ENCODE measurements at regions of chr6 and their contacts with region 1.

Region 1: DNA sequence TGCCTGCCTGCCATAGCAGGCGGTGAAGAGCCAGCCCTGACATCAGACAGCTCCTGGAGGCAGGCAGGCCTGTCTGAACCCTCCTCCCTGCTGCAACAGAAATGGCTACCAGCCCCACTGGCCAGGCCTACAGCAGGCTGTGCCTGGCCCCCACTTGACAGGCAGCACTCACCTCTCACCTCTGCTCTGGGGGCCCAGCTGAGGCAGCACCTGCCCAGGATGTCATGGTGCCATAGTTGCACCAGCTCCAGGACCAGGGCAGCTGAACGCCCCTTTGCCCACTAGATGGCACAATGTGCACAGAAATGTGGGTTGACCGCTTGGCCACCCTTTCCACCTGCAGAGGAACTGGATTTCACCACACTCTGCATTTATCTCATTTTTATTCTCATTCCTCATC is 30.6 kb downstream of the MRPL14 start:
- DNase-seq: peak; percentile 85
- H3K4me3 Mint-ChIP-seq: no peak overlapping the region
- H3K27ac Mint-ChIP-seq: peak overlapping the region; percentile 18
- H3K4me1 Mint-ChIP-seq: no peaks in the 10 kb centered on the region
- H3K27me3 Mint-ChIP-seq: no peaks in the 10 kb centered on the region

Region 2: GRCh38 chr6:44111434-44112417 is 15.1 kb after region 1 on chr6:
- CTCF ChIA-PET with region 1: interaction called, 12 read pairs
- POLR2A ChIA-PET with region 1: no interaction called
- intact Hi-C with region 1: no loop called
- DNase-seq: no peak
- H3K4me3 Mint-ChIP-seq: no peak overlapping the region
- H3K27ac Mint-ChIP-seq: no peak overlapping the region
- H3K4me1 Mint-ChIP-seq: peaks cover 7% of the 10 kb centered on the region
- H3K27me3 Mint-ChIP-seq: no peaks in the 10 kb centered on the region

Region 3: GRCh38 chr6:44116641-44117382 is 20.2 kb after region 1 on chr6:
- CTCF ChIA-PET with region 1: interaction called, 12 read pairs
- POLR2A ChIA-PET with region 1: interaction called, 4 read pairs
- intact Hi-C with region 1: no loop called
- DNase-seq: no peak
- H3K4me3 Mint-ChIP-seq: no peak overlapping the region
- H3K27ac Mint-ChIP-seq: no peak overlapping the region
- H3K4me1 Mint-ChIP-seq: peaks cover 43% of the 10 kb centered on the region
- H3K27me3 Mint-ChIP-seq: no peaks in the 10 kb centered on the region

Region 4: DNA sequence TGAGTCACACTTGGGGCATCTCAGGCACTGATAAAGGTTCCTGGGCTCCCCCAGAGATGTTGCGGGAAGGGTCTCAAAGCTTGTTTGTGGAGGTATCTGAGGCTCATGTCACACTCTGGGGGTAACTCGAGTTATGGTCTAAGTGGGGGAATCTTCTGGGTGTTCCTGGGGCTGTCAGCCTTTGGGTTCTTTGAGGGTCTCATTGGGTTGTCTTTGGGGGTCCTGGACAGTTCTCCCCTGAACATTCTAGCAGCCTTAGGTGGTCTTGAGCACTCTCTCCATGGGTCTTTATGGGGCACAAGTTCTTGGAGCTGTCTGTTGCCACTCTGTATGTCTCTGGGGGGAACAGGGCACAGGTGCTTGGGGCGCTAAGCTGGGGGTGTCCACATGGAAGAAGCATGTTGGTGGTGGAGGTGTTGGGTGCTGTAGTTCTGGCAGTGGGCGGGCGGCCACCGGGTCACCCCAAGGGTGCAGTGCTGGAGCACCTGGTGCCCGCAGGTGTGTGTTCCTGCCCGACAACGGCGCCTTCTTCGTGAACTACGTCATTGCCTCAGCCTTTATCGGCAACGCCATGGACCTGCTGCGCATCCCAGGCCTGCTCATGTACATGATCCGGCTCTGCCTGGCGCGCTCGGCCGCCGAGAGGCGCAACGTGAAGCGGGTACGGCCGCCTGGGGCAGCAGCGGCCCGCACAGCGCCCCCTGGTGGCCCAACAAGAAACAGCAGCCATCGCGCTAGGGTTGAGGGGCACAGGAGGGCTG is 54.9 kb after region 1 on chr6:
- CTCF ChIA-PET with region 1: interaction called, 41 read pairs
- POLR2A ChIA-PET with region 1: no interaction called
- intact Hi-C with region 1: loop called (anchors 1 kb)
- DNase-seq: peak; percentile 85
- H3K4me3 Mint-ChIP-seq: no peak overlapping the region
- H3K27ac Mint-ChIP-seq: no peak overlapping the region
- H3K4me1 Mint-ChIP-seq: peaks cover 5% of the 10 kb centered on the region
- H3K27me3 Mint-ChIP-seq: no peaks in the 10 kb centered on the region

Region 5: GRCh38 chr6:44237813-44238433 is 141.3 kb after region 1 on chr6:
- CTCF ChIA-PET with region 1: interaction called, 9 read pairs
- POLR2A ChIA-PET with region 1: no interaction called
- intact Hi-C with region 1: loop called (anchors 5 kb)
- DNase-seq: peak; percentile 87
- H3K4me3 Mint-ChIP-seq: peak overlapping the region; percentile 83
- H3K27ac Mint-ChIP-seq: peak overlapping the region; percentile 95
- H3K4me1 Mint-ChIP-seq: peaks cover 29% of the 10 kb centered on the region
- H3K27me3 Mint-ChIP-seq: no peaks in the 10 kb centered on the region

Region 6: GRCh38 chr6:44338228-44339122 is 241.9 kb after region 1 on chr6:
- CTCF ChIA-PET with region 1: interaction called, 9 read pairs
- POLR2A ChIA-PET with region 1: no interaction called
- intact Hi-C with region 1: loop called (anchors 1 kb)
- DNase-seq: peak; percentile 79
- H3K4me3 Mint-ChIP-seq: no peak overlapping the region
- H3K27ac Mint-ChIP-seq: peak overlapping the region; percentile 8
- H3K4me1 Mint-ChIP-seq: peaks cover 3% of the 10 kb centered on the region
- H3K27me3 Mint-ChIP-seq: peaks cover 19% of the 10 kb centered on the region